Common myeloid progenitor, CD34-positive (primary cell): ENCODE measurements at regions of chr2 and their contacts with region 1.

Region 1: GRCh38 chr2:197168705-197169104 is 141.9 kb downstream of the ANKRD44 start:
- DNase-seq: peak; percentile 71 to 84 (median 80)
- H3K4me3 ChIP-seq: no peak overlapping the region
- H3K27ac ChIP-seq: no peak overlapping the region
- H3K4me1 ChIP-seq: peaks cover 2 to 7% (median 4%) of the 10 kb centered on the region in 4 experiments
- H3K27me3 ChIP-seq: no peaks in the 10 kb centered on the region

Region 2: GRCh38 chr2:197130318-197130717 is 38.4 kb before region 1 on chr2:
- CTCF ChIA-PET with region 1: interaction called, 13 read pairs
- POLR2A ChIA-PET with region 1: no interaction called
- DNase-seq: peak; percentile 11 to 52 (median 47)
- H3K4me3 ChIP-seq: no peak overlapping the region
- H3K27ac ChIP-seq: peak overlapping the region in 1 of 2 experiments; percentile 38
- H3K4me1 ChIP-seq: peaks cover 0 to 14% (median 3%) of the 10 kb centered on the region in 4 experiments
- H3K27me3 ChIP-seq: no peaks in the 10 kb centered on the region

Region 3: GRCh38 chr2:197152451-197153228 is 16.1 kb before region 1 on chr2:
- CTCF ChIA-PET with region 1: interaction called, 19 read pairs
- POLR2A ChIA-PET with region 1: no interaction called
- DNase-seq: peak; percentile 79 to 95 (median 90)
- H3K4me3 ChIP-seq: peak overlapping the region in 4 of 7 experiments; percentile 15 to 47 (median 40)
- H3K27ac ChIP-seq: peak overlapping the region; percentile 21 to 52
- H3K4me1 ChIP-seq: peaks cover 13 to 32% (median 25%) of the 10 kb centered on the region in 4 experiments
- H3K27me3 ChIP-seq: no peaks in the 10 kb centered on the region

Region 4: DNA sequence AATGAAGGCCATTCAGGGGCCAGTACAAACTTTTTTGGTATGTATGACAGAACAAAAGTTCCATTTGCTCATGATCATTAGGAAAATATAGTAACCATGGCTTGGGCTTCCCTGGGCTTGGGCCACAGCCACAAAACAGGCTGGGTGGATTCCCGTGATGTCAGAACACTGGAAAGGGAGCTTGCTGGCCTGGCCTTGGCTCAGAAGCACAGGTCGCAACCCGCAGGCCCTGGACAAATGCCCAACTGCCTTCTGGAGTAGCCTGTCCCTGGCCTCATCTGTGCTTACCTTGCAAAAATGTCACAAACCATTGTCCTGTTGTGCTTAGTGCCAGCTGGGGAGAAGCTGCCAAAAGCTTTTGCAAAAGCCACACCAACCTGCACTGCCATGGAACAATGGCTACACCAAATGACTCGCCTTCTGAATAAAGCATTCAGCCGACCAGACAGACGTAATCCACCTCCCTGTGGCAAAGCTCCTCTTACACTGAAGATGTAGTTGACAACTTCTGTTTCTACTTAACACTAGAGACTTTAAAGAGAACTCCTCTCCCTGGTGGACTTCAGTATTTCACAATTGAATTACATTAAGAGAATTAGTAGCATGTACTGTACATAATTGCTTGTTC is 16.4 kb after region 1 on chr2:
- CTCF ChIA-PET with region 1: interaction called, 67 read pairs
- POLR2A ChIA-PET with region 1: no interaction called
- DNase-seq: no peak
- H3K4me3 ChIP-seq: no peak overlapping the region
- H3K27ac ChIP-seq: no peak overlapping the region
- H3K4me1 ChIP-seq: no peaks in the 10 kb centered on the region
- H3K27me3 ChIP-seq: no peaks in the 10 kb centered on the region